CD4-positive, alpha-beta memory T cell (primary cell): ENCODE measurements at regions of chr1 and their contacts with region 1.

Region 1: DNA sequence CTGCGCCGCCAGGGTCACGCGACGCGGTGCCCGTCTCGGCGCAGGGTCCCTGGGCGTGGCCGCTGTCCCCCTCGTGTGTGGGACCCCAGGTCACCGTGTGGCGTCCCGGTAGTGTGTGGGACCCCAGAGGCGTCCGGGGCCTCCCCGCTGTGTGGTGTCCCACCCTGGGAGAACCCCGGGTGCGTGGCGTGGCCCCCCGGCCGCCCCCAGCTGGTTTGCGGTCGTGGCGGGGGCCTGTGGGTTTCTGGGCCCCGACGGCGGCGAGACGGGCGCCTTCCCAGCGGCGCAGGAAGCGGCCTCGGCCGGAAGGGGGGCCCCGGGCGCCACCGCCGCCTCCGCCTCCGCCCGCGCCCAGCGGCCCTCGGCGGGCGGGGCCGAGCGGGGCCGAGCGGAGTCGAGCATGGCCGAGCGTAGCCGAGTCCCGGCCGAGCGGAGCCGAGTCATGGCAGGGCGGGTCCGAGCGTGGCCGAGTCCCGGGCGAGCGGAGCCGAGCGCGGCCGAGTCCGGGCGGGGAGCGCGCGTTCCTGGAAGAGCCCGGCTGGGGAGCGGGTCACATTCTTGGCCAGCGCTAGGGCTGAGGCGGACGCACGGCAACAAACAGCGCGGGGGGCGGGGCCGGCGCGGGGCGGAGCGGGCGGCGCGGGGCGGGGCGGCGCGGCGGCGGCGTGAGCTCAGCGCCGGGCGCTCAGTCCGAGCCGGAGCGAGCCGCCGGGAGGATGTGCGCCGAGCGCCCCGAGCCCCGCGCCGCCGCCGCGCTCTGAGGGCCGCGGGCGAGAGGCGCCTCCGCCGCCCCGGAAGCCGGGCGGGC is 569 bp upstream of the SKI start:
- DNase-seq: peak; percentile 90 to 98 (median 96)
- H3K4me3 ChIP-seq: no peak overlapping the region
- H3K4me3 Mint-ChIP-seq: peak overlapping the region in 7 of 8 donors; percentile 51 to 82 (median 67)
- H3K27ac ChIP-seq: peak overlapping the region; percentile 26
- H3K27ac Mint-ChIP-seq: peak overlapping the region in 4 of 7 donors; percentile 41 to 79 (median 59)
- H3K4me1 ChIP-seq: peaks cover 20% of the 10 kb centered on the region
- H3K4me1 Mint-ChIP-seq: peaks cover 6 to 27% (median 16%) of the 10 kb centered on the region in 4 donors
- H3K27me3 ChIP-seq: no peaks in the 10 kb centered on the region
- H3K27me3 Mint-ChIP-seq: peaks cover 0 to 4% of the 10 kb centered on the region in 2 donors

Region 2: DNA sequence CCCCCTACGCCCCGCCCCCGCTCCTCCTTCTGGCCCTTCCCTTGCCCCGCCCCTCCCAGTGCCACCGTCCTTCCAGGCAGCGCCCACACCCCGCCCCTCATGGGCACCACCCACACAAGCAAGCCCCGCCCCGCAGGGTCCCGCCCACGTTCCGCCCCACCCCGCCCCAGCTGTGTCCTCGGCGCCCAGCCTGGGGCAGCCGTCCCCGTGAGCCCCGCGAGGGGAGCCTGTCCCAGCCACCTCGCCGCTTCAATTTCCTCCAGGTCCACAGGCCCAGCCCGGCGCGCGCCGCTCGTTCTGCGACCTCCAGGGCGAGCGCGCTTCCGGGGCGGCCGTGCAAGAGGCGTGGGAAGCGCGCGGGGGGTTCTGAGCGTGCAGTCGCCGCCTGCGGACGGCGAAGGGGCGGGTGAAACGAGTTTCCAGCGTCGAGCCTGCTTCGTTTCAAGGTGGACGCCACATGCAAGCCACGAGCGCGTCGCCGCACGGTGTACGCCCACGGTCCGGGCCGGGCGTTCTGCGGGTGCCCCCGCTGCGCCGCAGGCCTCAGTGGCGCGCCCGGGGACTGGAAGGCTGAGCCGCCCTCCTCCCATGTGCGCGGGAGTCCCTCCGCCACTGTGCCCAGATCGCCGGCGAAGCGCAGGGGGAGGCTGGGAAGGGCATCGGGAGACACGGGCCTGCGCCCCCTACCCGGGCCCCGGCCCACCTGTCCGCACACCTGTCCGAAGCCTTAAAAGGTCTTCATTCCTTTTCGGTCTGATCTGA is 22.2 kb before region 1 on chr1:
- CTCF ChIA-PET with region 1: interaction called, 4 read pairs
- POLR2A ChIA-PET with region 1: interaction called, 83 read pairs
- intact Hi-C with region 1: loop called (anchors 2 kb)
- DNase-seq: peak; percentile 90 to 95 (median 91)
- H3K4me3 ChIP-seq: peak overlapping the region; percentile 6 to 47
- H3K4me3 Mint-ChIP-seq: peak overlapping the region; percentile 48 to 71 (median 68)
- H3K27ac ChIP-seq: peak overlapping the region; percentile 38
- H3K27ac Mint-ChIP-seq: peak overlapping the region in 3 of 7 donors; percentile 35 to 79 (median 62)
- H3K4me1 ChIP-seq: peaks cover 26% of the 10 kb centered on the region
- H3K4me1 Mint-ChIP-seq: peaks cover 0 to 15% (median 3%) of the 10 kb centered on the region in 4 donors
- H3K27me3 ChIP-seq: no peaks in the 10 kb centered on the region
- H3K27me3 Mint-ChIP-seq: no peaks in the 10 kb centered on the region

Region 3: GRCh38 chr1:2240270-2241156 is 13.0 kb after region 1 on chr1:
- CTCF ChIA-PET with region 1: interaction called, 3 read pairs
- POLR2A ChIA-PET with region 1: interaction called, 51 read pairs
- intact Hi-C with region 1: no loop called
- DNase-seq: peak in 4 of 5 donors; percentile 18 to 59 (median 30)
- H3K4me3 ChIP-seq: no peak overlapping the region
- H3K4me3 Mint-ChIP-seq: peak overlapping the region; percentile 58 to 82 (median 73)
- H3K27ac ChIP-seq: no peak overlapping the region
- H3K27ac Mint-ChIP-seq: peak overlapping the region in 6 of 7 donors; percentile 75 to 91 (median 87)
- H3K4me1 ChIP-seq: peaks cover 90% of the 10 kb centered on the region
- H3K4me1 Mint-ChIP-seq: peaks cover 53 to 91% (median 76%) of the 10 kb centered on the region in 4 donors
- H3K27me3 ChIP-seq: no peaks in the 10 kb centered on the region
- H3K27me3 Mint-ChIP-seq: no peaks in the 10 kb centered on the region

Region 4: GRCh38 chr1:2290595-2291510 is 63.3 kb after region 1 on chr1:
- CTCF ChIA-PET with region 1: interaction called, 3 read pairs
- POLR2A ChIA-PET with region 1: interaction called, 71 read pairs
- intact Hi-C with region 1: loop called (anchors 2 kb)
- DNase-seq: peak; percentile 73 to 91 (median 79)
- H3K4me3 ChIP-seq: peak overlapping the region; percentile 32 to 69
- H3K4me3 Mint-ChIP-seq: peak overlapping the region; percentile 86 to 95 (median 88)
- H3K27ac ChIP-seq: peak overlapping the region; percentile 73
- H3K27ac Mint-ChIP-seq: peak overlapping the region; percentile 92 to 99 (median 98)
- H3K4me1 ChIP-seq: peaks cover 91% of the 10 kb centered on the region
- H3K4me1 Mint-ChIP-seq: peaks cover 39 to 97% (median 78%) of the 10 kb centered on the region in 4 donors
- H3K27me3 ChIP-seq: no peaks in the 10 kb centered on the region
- H3K27me3 Mint-ChIP-seq: no peaks in the 10 kb centered on the region

Region 5: GRCh38 chr1:2314803-2315673 is 87.5 kb after region 1 on chr1:
- CTCF ChIA-PET with region 1: interaction called, 8 read pairs
- POLR2A ChIA-PET with region 1: interaction called, 88 read pairs
- intact Hi-C with region 1: loop called (anchors 2 kb)
- DNase-seq: peak; percentile 65 to 71 (median 67)
- H3K4me3 ChIP-seq: no peak overlapping the region
- H3K4me3 Mint-ChIP-seq: peak overlapping the region in 6 of 8 donors; percentile 21 to 70 (median 55)
- H3K27ac ChIP-seq: peak overlapping the region; percentile 63
- H3K27ac Mint-ChIP-seq: peak overlapping the region in 5 of 7 donors; percentile 36 to 79 (median 74)
- H3K4me1 ChIP-seq: peaks cover 42% of the 10 kb centered on the region
- H3K4me1 Mint-ChIP-seq: peaks cover 2 to 9% (median 4%) of the 10 kb centered on the region in 4 donors
- H3K27me3 ChIP-seq: no peaks in the 10 kb centered on the region
- H3K27me3 Mint-ChIP-seq: no peaks in the 10 kb centered on the region